ENCODE measurements at regions of chr15 and their contacts with region 1.

Region 1: GRCh38 chr15:51888593-51889195 is 59.2 kb downstream of the TMOD3 start:
- DNase-seq: no peak
- ATAC-seq: no peak
- H3K4me3 ChIP-seq: no peak overlapping the region
- H3K27ac ChIP-seq: no peak overlapping the region
- H3K4me1 ChIP-seq: peaks cover 0 to 5% of the 10 kb centered on the region in 2 donors
- H3K27me3 ChIP-seq: no peaks in the 10 kb centered on the region
- CTCF ChIP-seq: peak; percentile 46 to 73 (median 68)
- POLR2A ChIP-seq: no peak

Region 2: DNA sequence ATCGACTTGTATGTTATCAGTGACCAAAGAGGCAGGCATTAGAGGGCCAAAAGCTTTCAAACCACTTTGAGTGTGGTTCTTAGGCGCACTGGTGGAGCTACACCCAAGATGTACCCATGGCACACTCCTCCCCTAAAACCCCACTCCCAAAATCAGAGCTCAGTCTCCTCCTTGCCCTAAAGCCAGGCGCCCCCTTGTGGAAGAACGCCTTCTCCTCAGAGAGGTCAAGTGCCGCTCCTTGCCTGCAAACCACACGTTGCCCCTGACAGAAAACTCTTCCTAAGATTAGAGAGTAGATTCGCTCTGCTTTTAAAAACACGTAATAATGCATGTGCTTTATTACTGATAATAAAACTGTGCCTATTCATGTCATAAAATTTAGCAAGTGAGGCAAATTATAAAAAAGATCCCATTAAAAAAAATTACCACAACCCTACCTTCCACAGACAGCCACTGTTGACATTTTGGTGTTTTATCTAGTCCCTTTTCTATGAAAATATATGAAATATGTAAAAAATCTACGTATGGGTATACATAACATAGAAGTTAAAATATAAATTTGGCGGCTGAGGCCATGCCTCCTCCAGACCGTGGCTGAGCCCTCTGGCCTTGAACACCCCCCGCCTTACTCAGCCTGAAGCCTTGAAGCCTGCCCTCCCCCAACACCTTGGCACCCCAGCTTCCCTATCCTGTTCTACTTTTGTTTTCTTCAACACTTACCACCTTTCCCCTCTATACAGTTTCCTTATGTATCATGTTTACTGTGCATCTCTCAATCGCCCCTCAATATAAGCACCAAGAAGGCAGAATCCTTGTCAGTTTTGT is 190.4 kb after region 1 on chr15:
- in situ Hi-C with region 1: no loop called
- intact Hi-C with region 1: loop called (anchors 2 kb)
- DNase-seq: peak; percentile 55 to 67
- ATAC-seq: peak; percentile 60 to 87
- H3K4me3 ChIP-seq: no peak overlapping the region
- H3K27ac ChIP-seq: no peak overlapping the region
- H3K4me1 ChIP-seq: no peaks in the 10 kb centered on the region
- H3K27me3 ChIP-seq: no peaks in the 10 kb centered on the region
- CTCF ChIP-seq: peak; percentile 64 to 85 (median 78)
- POLR2A ChIP-seq: no peak

Region 3: DNA sequence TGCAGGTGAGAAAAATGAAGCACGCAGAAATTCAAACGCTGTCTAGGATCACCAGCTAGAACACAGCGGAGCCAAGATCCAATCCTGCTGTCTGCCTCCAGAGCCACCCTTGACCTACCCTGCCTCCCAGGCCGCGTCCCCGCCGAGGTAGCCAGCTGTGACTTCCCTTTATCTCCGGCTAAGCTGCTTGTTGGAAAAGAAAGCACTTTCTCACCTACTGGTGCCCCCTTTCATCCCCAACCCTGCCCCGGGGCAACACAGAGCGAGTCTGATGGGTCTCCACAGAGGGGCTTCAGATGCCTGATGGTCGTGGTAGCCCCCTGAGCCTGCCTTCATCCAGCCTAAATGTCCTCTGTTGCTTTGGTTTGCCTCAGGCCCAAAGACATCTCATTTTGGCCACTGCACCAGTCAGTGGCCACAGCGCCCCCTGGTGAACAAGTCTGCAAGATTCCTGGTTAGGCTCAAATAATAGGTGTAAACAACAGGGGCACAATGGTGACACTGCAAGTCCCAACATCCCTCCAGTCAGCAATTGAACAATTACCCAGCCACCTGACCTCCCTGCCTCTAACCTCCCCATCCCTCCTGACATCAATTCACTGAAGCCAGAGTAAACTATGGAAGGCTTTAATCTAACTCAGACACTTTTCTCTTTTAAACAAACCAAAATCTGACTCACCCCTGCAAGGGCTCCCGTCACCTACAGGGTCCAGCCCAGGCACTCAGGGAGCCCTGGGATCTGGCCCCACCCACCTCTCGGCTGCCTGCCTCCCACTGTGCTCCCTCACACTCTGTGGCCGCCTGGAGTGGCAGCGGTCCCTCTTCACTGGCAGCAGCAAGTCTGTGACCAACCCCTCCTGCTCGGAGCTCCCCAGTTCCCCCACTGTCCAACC is 251.2 kb after region 1 on chr15:
- in situ Hi-C with region 1: loop called in 1 of 4 experiments (anchors 10 kb)
- intact Hi-C with region 1: loop called (anchors 5 kb)
- DNase-seq: peak; percentile 29 to 44
- ATAC-seq: peak in 1 of 2 donors; percentile 66
- H3K4me3 ChIP-seq: no peak overlapping the region
- H3K27ac ChIP-seq: no peak overlapping the region
- H3K4me1 ChIP-seq: peaks cover 0 to 4% of the 10 kb centered on the region in 2 donors
- H3K27me3 ChIP-seq: no peaks in the 10 kb centered on the region
- CTCF ChIP-seq: peak; percentile 45 to 72 (median 67)
- POLR2A ChIP-seq: no peak

Region 4: DNA sequence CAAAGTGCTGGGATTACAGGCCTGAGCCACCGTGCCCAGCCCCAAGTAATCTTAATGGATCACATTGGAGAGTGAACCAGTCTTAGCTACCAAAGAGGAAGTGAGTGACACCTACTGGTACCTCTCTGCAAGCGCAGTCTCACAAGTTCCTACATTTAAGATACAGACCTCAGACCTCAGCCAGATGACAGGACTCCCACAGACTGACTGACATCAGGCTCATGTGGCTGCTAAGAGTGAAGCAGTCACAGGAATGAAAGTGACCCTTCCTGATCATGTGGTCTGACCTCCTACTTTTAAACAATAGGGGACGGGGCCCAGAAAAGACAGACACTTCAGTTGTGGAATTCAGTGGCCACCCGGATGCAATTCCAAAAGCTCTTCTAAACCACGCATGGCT is 338.8 kb after region 1 on chr15:
- in situ Hi-C with region 1: no loop called
- intact Hi-C with region 1: loop called (anchors 10 kb)
- DNase-seq: peak; percentile 30 to 64
- ATAC-seq: peak; percentile 92 to 93
- H3K4me3 ChIP-seq: no peak overlapping the region
- H3K27ac ChIP-seq: no peak overlapping the region
- H3K4me1 ChIP-seq: no peaks in the 10 kb centered on the region
- H3K27me3 ChIP-seq: no peaks in the 10 kb centered on the region
- CTCF ChIP-seq: peak; percentile 45 to 79 (median 69)
- POLR2A ChIP-seq: no peak